ENCODE measurements at regions of chrX and their contacts with region 1.

Region 1: DNA sequence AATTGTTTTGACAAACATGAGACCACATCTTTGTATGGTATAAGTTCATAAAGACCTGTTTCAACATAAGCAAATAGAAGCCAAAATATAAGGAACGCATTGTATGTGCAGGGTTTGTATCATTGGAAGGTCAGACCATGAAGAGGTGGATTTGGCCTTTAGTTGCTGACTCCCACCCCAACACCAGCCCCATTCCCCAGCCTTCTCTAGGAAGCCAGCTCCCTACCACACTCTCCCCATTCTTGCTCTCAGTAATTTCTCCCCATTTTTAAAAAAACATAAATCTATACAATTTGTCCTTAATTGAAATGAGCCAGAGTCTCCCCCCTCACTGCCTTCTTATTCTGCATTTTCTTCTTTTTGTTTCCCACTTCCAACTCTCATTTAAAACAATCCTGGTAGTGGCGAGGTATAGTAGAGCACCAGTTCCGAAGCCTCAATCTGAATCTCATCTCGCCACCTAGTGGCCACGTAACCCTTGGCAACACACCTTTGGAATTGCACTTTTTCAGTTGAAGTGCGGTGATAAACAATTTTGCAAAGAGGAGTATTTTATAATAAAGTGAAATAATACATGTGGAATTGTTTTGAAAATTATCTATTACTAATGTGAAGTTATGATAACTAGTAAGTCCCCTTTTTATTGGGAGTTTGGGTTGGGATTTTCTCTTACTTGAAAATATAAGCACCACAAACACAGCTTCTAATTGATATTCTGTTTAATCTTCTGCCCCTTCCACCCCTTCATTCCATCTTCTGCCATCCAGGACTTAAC is 126.6 kb downstream of the ASB9 start:
- DNase-seq: peak; percentile 54
- ATAC-seq: peak; percentile 36
- H3K4me3 ChIP-seq: no peak overlapping the region
- H3K4me3 Mint-ChIP-seq: no peak overlapping the region
- H3K27ac ChIP-seq: no peak overlapping the region
- H3K27ac Mint-ChIP-seq: no peak overlapping the region
- H3K4me1 ChIP-seq: no peaks in the 10 kb centered on the region
- H3K4me1 Mint-ChIP-seq: peaks cover 2% of the 10 kb centered on the region
- H3K27me3 ChIP-seq: no peaks in the 10 kb centered on the region
- H3K27me3 Mint-ChIP-seq: no peaks in the 10 kb centered on the region
- CTCF ChIP-seq: peak; percentile 70

Region 2: GRCh38 chrX:14039344-14039743 is 1103.9 kb before region 1 on chrX:
- CTCF ChIA-PET with region 1: interaction called, 45 read pairs
- POLR2A ChIA-PET with region 1: no interaction called
- intact Hi-C with region 1: loop called (anchors 1 kb)
- DNase-seq: peak; percentile 70
- ATAC-seq: peak; percentile 75
- H3K4me3 ChIP-seq: no peak overlapping the region
- H3K4me3 Mint-ChIP-seq: no peak overlapping the region
- H3K27ac ChIP-seq: no peak overlapping the region
- H3K27ac Mint-ChIP-seq: no peak overlapping the region
- H3K4me1 ChIP-seq: no peaks in the 10 kb centered on the region
- H3K4me1 Mint-ChIP-seq: no peaks in the 10 kb centered on the region
- H3K27me3 ChIP-seq: peaks cover 0 to 11% (median 0%) of the 10 kb centered on the region in 4 experiments
- H3K27me3 Mint-ChIP-seq: no peaks in the 10 kb centered on the region
- CTCF ChIP-seq: peak; percentile 69

Region 3: GRCh38 chrX:14095702-14096101 is 1047.5 kb before region 1 on chrX:
- CTCF ChIA-PET with region 1: interaction called, 18 read pairs
- POLR2A ChIA-PET with region 1: no interaction called
- intact Hi-C with region 1: no loop called
- DNase-seq: peak; percentile 53
- ATAC-seq: peak; percentile 53
- H3K4me3 ChIP-seq: peak overlapping the region in 2 of 5 experiments; percentile 8 to 37
- H3K4me3 Mint-ChIP-seq: peak overlapping the region; percentile 47
- H3K27ac ChIP-seq: no peak overlapping the region
- H3K27ac Mint-ChIP-seq: no peak overlapping the region
- H3K4me1 ChIP-seq: no peaks in the 10 kb centered on the region
- H3K4me1 Mint-ChIP-seq: peaks cover 3% of the 10 kb centered on the region
- H3K27me3 ChIP-seq: no peaks in the 10 kb centered on the region
- H3K27me3 Mint-ChIP-seq: peaks cover 4% of the 10 kb centered on the region
- CTCF ChIP-seq: peak; percentile 61

Region 4: DNA sequence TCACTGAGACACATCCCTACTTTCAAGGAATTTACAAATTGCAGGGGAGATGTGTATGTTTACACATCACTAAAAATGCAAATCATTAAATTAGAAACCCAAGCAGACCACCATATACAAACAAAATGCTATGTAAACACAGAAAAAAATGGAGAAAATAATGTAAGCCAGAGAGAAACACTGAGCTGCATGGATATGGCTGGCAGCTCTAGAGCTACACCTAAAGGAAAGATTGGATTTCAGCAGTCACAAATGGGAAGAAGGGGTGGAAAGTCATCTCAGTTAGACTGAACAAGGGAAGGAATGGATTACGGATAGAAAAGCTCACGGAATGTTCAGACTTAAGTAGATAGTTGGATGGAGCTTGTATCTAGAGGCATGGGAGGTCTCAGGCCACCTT is 83.8 kb before region 1 on chrX:
- CTCF ChIA-PET with region 1: no interaction called
- POLR2A ChIA-PET with region 1: no interaction called
- intact Hi-C with region 1: no loop called
- DNase-seq: no peak
- ATAC-seq: no peak
- H3K4me3 ChIP-seq: no peak overlapping the region
- H3K4me3 Mint-ChIP-seq: no peak overlapping the region
- H3K27ac ChIP-seq: no peak overlapping the region
- H3K27ac Mint-ChIP-seq: no peak overlapping the region
- H3K4me1 ChIP-seq: no peaks in the 10 kb centered on the region
- H3K4me1 Mint-ChIP-seq: no peaks in the 10 kb centered on the region
- H3K27me3 ChIP-seq: no peaks in the 10 kb centered on the region
- H3K27me3 Mint-ChIP-seq: peaks cover 4% of the 10 kb centered on the region
- CTCF ChIP-seq: no peak

Measured in B cell (primary cell).